ENCODE measurements at regions of chr4 and their contacts with region 1.

Region 1: DNA sequence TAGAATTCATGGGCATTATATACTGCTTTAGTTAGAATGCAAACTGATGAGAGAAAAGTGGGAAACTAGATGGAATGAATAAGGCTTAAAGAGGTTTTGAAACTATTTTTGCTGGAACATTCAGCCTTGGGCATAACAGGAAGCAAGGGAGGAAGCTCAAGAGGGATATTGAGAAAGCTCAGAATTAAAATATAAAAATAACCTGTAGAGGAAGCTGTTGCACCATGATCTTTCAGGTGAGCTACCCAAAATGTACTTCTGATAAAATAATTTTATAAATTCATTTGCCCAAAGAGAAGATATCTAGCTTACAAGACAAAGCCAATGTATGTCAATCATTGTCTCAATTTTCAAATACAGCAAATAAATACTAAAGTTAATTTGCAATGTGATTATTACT is 11.3 kb downstream of the GC start:
- DNase-seq: no peak
- H3K4me3 ChIP-seq: no peak overlapping the region
- H3K27ac ChIP-seq: no peak overlapping the region
- H3K4me1 ChIP-seq: no peaks in the 10 kb centered on the region
- H3K27me3 ChIP-seq: no peaks in the 10 kb centered on the region
- CTCF ChIP-seq: 0 out of 2 replicates have a peak, but pooled peaks have one; percentile 23

Region 2: GRCh38 chr4:71009890-71010588 is 762.6 kb before region 1 on chr4:
- CTCF ChIA-PET with region 1: no interaction called
- POLR2A ChIA-PET with region 1: no interaction called
- intact Hi-C with region 1: no loop called
- DNase-seq: peak; percentile 49
- H3K4me3 ChIP-seq: no peak overlapping the region
- H3K27ac ChIP-seq: no peak overlapping the region
- H3K4me1 ChIP-seq: no peaks in the 10 kb centered on the region
- H3K27me3 ChIP-seq: no peaks in the 10 kb centered on the region
- CTCF ChIP-seq: peak; percentile 63

Region 3: DNA sequence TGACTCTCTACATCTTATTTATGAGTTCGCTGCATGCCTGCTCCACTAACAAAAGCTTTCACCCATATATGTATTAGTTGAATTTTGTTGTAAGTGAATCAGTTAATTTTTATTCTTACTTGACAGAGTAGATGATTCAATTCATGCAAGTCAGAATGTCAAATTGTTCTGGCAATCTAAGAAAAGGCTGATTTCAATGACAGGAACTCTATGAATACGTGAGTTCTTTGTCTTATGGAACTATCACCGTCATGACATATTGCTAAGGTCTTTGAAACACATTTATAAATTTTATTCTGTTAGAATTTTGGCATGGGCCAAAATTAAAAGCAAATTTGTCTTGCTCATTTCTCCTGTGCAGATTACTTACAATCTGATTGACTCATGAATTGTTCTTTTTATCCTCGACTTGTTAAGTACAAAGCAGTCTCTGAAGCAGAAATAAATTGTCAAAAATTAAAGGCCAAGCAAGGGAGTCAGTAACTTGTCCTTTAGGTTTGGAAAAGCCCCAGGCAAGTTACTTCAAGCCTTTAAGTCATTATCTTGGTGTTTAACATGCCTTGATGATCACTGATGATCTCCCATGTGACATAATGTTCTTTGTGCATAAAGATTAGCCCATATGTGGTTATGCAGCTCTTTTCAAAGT is 100.3 kb after region 1 on chr4:
- CTCF ChIA-PET with region 1: no interaction called
- POLR2A ChIA-PET with region 1: no interaction called
- intact Hi-C with region 1: loop called (anchors 10 kb)
- DNase-seq: peak; percentile 61
- H3K4me3 ChIP-seq: no peak overlapping the region
- H3K27ac ChIP-seq: peak overlapping the region; percentile 29
- H3K4me1 ChIP-seq: peaks cover 32% of the 10 kb centered on the region
- H3K27me3 ChIP-seq: no peaks in the 10 kb centered on the region
- CTCF ChIP-seq: no peak

Region 4: GRCh38 chr4:71878376-71878775 is 105.8 kb after region 1 on chr4:
- CTCF ChIA-PET with region 1: no interaction called
- POLR2A ChIA-PET with region 1: interaction called, 11 read pairs
- intact Hi-C with region 1: loop called (anchors 10 kb)
- DNase-seq: peak; percentile 84
- H3K4me3 ChIP-seq: no peak overlapping the region
- H3K27ac ChIP-seq: peak overlapping the region; percentile 92
- H3K4me1 ChIP-seq: peaks cover 42% of the 10 kb centered on the region
- H3K27me3 ChIP-seq: no peaks in the 10 kb centered on the region
- CTCF ChIP-seq: no peak

Measured in A673 (cell line).